ENCODE measurements at regions of chr11 and their contacts with region 1.

Region 1: DNA sequence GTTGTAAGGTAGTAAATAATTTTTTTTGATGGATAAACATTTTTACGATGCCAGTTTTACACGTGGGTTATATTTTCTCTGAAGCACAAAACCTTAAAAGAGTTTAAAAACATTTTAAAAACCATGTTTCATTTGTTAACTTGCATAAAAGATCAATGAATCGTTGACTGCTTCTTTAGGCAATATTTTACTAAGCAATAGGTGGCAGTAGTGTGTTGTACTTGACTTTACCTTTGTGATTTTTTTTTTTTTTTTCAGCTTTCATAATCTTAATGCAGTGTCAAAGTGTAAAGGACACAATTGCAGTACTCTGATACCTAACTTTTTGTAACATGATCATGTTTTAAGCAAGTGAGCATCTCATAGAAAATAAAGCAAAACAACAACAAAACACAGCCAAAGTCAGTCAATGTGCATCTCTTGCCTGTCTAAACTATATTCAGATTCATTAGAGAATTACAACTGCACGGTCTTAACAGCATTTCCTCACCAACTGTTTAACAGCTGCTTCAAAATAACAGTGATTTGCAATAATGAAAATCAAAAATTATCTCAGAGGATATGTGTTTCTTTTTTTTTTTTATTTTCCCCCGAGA is 27.7 kb downstream of the DNAJC24 start:
- DNase-seq: no peak
- H3K4me3 ChIP-seq: no peak overlapping the region
- H3K27ac ChIP-seq: no peak overlapping the region
- H3K4me1 ChIP-seq: no peaks in the 10 kb centered on the region
- H3K27me3 ChIP-seq: no peaks in the 10 kb centered on the region
- CTCF ChIP-seq: peak in 9 of 11 experiments; percentile 10 to 55 (median 39)
- POLR2A ChIP-seq: no peak

Region 2: GRCh38 chr11:31870609-31871309 is 473.4 kb after region 1 on chr11:
- intact Hi-C with region 1: loop called (anchors 10 kb)
- DNase-seq: no peak
- H3K4me3 ChIP-seq: no peak overlapping the region
- H3K27ac ChIP-seq: no peak overlapping the region
- H3K4me1 ChIP-seq: no peaks in the 10 kb centered on the region
- H3K27me3 ChIP-seq: peaks cover 0 to 78% (median 11%) of the 10 kb centered on the region in 7 donors
- CTCF ChIP-seq: peak in 9 of 11 experiments; percentile 14 to 51 (median 38)
- POLR2A ChIP-seq: no peak

Region 3: GRCh38 chr11:32006799-32007388 is 609.6 kb after region 1 on chr11:
- intact Hi-C with region 1: loop called (anchors 10 kb)
- DNase-seq: no peak
- H3K4me3 ChIP-seq: no peak overlapping the region
- H3K27ac ChIP-seq: no peak overlapping the region
- H3K4me1 ChIP-seq: no peaks in the 10 kb centered on the region
- H3K27me3 ChIP-seq: peaks cover 0 to 52% (median 7%) of the 10 kb centered on the region in 7 donors
- CTCF ChIP-seq: peak in 8 of 11 experiments; percentile 20 to 61 (median 48)
- POLR2A ChIP-seq: no peak

Measured in spleen (tissue), 13 donors.